Dendritic cell treated with granulocyte-macrophage colony-stimulating factor and Interleukin-4, amounts not matched to agents 40 ng/mL and 50 ng/mL, for 4 days (primary cell): ENCODE measurements at regions of chr20 and their contacts with region 1.

Region 1: DNA sequence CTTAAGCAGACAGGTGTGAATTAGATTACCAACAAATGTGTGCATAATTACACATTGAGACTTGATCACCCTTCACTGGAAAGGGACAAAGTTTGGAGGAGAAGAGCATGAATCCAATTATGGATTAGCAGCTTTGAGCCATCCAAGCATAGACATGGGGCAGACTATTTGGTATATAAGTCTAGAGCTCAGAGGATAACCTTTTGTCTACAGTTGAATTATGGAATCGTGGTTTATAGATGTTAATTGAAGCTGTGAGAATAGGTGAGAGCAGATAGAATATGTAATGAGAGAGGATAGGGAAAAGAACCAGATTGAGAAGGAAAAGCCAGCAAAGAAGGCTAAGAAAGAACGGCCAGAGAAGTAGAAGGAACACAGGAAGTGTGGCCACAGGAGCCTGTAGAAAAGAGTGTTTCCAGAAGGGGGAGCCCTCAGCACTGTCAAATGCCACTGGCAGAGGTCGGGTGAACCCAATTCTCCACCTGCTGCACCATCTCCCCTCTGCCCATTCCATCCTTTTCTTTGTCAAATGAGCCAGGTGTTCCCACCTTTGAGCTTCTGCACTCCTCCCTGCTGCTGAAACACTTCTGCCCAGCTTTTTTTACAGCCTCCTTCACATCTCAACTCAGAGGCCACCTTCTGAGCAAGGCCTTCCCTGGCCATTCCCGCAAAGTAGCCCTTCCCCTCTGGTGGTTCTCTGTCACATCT is 7.3 kb downstream of the DNTTIP1 start:
- H3K4me3 Mint-ChIP-seq: no peak overlapping the region
- H3K27ac Mint-ChIP-seq: peak overlapping the region; percentile 20
- H3K4me1 Mint-ChIP-seq: peaks cover 29% of the 10 kb centered on the region
- H3K27me3 Mint-ChIP-seq: no peaks in the 10 kb centered on the region

Region 2: GRCh38 chr20:45880988-45881788 is 82.1 kb after region 1 on chr20 and contains the start of gene ZSWIM1:
- intact Hi-C with region 1: loop called (anchors 10 kb)
- H3K4me3 Mint-ChIP-seq: peak within 1 kb of the TSS; percentile 89
- H3K27ac Mint-ChIP-seq: peak within 1 kb of the TSS; percentile 85
- H3K4me1 Mint-ChIP-seq: peaks cover 39% of the 10 kb centered on the region
- H3K27me3 Mint-ChIP-seq: no peaks in the 10 kb centered on the region

Region 3: GRCh38 chr20:45963059-45964005 is 164.2 kb after region 1 on chr20:
- intact Hi-C with region 1: loop called (anchors 2 kb)
- H3K4me3 Mint-ChIP-seq: no peak overlapping the region
- H3K27ac Mint-ChIP-seq: peak overlapping the region; percentile 10
- H3K4me1 Mint-ChIP-seq: peaks cover 5% of the 10 kb centered on the region
- H3K27me3 Mint-ChIP-seq: no peaks in the 10 kb centered on the region